Caco-2 (cell line): ENCODE measurements at regions of chr3 and their contacts with region 1.

Region 1: DNA sequence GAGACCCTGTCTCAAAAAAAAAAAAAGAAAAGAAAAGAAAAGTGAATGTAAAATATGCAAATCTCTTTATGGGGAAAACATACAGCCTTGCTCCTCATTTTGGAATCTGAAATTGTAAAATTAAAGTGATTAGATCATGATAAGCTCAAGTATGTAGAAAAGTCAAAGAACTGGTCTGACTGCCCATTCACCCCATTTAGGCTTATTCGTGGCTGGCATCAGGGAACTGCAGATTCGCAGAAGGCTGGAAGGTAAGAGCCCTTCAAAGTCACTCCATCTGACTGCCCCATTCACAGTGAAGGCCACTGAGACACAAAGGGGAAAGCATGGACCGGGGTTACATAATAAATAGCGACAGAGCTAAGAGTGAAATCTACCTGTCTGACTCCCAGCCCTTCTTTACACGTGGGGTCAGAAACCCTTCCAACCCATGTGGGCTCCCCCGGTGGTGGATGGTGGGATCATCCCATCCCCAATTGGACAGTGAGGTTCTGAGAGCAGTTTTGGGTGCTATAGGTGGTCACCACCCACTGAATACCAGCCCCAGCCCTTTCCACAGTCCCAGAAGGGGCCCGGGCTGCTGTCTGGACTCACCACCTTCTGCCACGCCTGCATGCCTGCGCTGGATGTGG is 18.1 kb downstream of the DZIP1L start:
- DNase-seq: peak in 1 of 2 experiments; percentile 62
- H3K4me3 ChIP-seq: no peak overlapping the region
- H3K4me3 Mint-ChIP-seq: no peak overlapping the region
- H3K27ac Mint-ChIP-seq: no peak overlapping the region
- H3K4me1 ChIP-seq: no peaks in the 10 kb centered on the region
- H3K4me1 Mint-ChIP-seq: no peaks in the 10 kb centered on the region
- H3K27me3 ChIP-seq: no peaks in the 10 kb centered on the region
- H3K27me3 Mint-ChIP-seq: no peaks in the 10 kb centered on the region
- CTCF ChIP-seq: peak; percentile 53 to 67

Region 2: GRCh38 chr3:138068579-138069174 is 28.6 kb before region 1 on chr3:
- CTCF ChIA-PET with region 1: no interaction called
- POLR2A ChIA-PET with region 1: no interaction called
- intact Hi-C with region 1: loop called (anchors 2 kb)
- DNase-seq: peak; percentile 75 to 82
- H3K4me3 ChIP-seq: no peak overlapping the region
- H3K4me3 Mint-ChIP-seq: no peak overlapping the region
- H3K27ac Mint-ChIP-seq: no peak overlapping the region
- H3K4me1 ChIP-seq: no peaks in the 10 kb centered on the region
- H3K4me1 Mint-ChIP-seq: no peaks in the 10 kb centered on the region
- H3K27me3 ChIP-seq: no peaks in the 10 kb centered on the region
- H3K27me3 Mint-ChIP-seq: no peaks in the 10 kb centered on the region
- CTCF ChIP-seq: peak; percentile 96 to 97

Region 3: DNA sequence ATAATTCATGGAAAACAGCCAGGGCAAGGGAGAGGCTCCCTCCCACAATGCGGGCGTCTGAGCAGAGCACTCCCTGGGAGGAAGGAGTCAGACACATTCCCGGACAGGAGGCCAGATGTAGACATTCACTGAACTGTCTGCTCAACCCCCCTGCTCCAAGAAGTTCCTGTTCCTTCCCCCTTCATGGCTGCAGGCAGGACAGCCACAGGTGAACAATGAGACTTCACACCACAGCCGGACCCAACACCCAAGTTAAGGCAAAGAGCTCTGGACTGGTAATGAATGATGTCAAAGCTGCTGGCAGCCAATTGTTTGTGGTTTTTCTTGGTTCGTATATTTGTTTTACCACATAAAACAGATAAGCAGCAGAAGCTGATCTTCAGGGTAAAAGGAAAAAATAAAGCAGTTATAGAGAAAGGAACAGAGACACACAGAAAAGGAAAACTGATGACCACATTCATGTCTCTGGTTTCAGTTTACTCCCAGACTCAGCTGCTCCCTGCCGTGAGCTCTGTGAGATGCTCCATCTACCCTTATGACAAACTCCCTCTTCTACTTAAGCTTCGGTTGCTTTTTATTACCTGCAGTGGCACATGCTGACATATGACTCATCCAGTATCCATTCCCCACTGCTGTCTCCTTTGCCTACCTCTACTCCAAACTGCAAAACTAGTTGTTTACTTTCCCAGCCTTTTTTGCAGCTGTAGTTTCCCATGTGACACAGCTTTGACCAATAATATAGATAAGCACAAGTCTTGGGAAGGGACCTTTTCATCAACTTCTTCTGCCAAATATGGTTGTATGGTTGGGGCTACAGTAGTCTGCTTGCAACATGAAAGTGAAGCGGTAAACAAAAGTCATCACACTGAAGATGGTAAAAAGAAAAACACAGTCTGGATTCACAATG is 14.9 kb before region 1 on chr3:
- CTCF ChIA-PET with region 1: interaction called, 4 read pairs
- POLR2A ChIA-PET with region 1: no interaction called
- intact Hi-C with region 1: loop called (anchors 2 kb)
- DNase-seq: peak in 1 of 2 experiments; percentile 45
- H3K4me3 ChIP-seq: no peak overlapping the region
- H3K4me3 Mint-ChIP-seq: peak overlapping the region; percentile 13
- H3K27ac Mint-ChIP-seq: peak overlapping the region; percentile 45
- H3K4me1 ChIP-seq: peaks cover 12% of the 10 kb centered on the region; the same call in 1 of the 2 replicates
- H3K4me1 Mint-ChIP-seq: peaks cover 15% of the 10 kb centered on the region
- H3K27me3 ChIP-seq: no peaks in the 10 kb centered on the region
- H3K27me3 Mint-ChIP-seq: no peaks in the 10 kb centered on the region
- CTCF ChIP-seq: no peak

Region 4: GRCh38 chr3:138118612-138119422 is 21.5 kb after region 1 on chr3:
- CTCF ChIA-PET with region 1: interaction called, 4 read pairs
- POLR2A ChIA-PET with region 1: no interaction called
- intact Hi-C with region 1: loop called (anchors 2 kb)
- DNase-seq: peak; percentile 77 to 82
- H3K4me3 ChIP-seq: no peak overlapping the region
- H3K4me3 Mint-ChIP-seq: no peak overlapping the region
- H3K27ac Mint-ChIP-seq: no peak overlapping the region
- H3K4me1 ChIP-seq: peaks cover 5% of the 10 kb centered on the region
- H3K4me1 Mint-ChIP-seq: no peaks in the 10 kb centered on the region
- H3K27me3 ChIP-seq: no peaks in the 10 kb centered on the region
- H3K27me3 Mint-ChIP-seq: no peaks in the 10 kb centered on the region
- CTCF ChIP-seq: peak; percentile 78 to 85